ENCODE measurements at regions of chr16 and their contacts with region 1.

Region 1: GRCh38 chr16:84277237-84277823 is 17.3 kb upstream of the WFDC1 start:
- DNase-seq: peak; percentile 92
- H3K4me3 ChIP-seq: no peak overlapping the region
- H3K27ac ChIP-seq: no peak overlapping the region
- H3K4me1 ChIP-seq: peaks cover 0 to 4% (median 0%) of the 10 kb centered on the region in 6 donors
- H3K27me3 ChIP-seq: peaks cover 0 to 58% (median 0%) of the 10 kb centered on the region in 7 donors
- CTCF ChIP-seq: peak; percentile 31 to 86 (median 76)
- POLR2A ChIP-seq: no peak

Region 2: GRCh38 chr16:84484579-84485254 is 207.4 kb after region 1 on chr16:
- intact Hi-C with region 1: loop called (anchors 5 kb)
- DNase-seq: peak; percentile 72
- H3K4me3 ChIP-seq: no peak overlapping the region
- H3K27ac ChIP-seq: no peak overlapping the region
- H3K4me1 ChIP-seq: peaks cover 0 to 4% (median 0%) of the 10 kb centered on the region in 6 donors
- H3K27me3 ChIP-seq: no peaks in the 10 kb centered on the region
- CTCF ChIP-seq: peak; percentile 32 to 81 (median 62)
- POLR2A ChIP-seq: no peak

Region 3: GRCh38 chr16:84511180-84511824 is 234.0 kb after region 1 on chr16:
- intact Hi-C with region 1: no loop called
- DNase-seq: peak; percentile 96
- H3K4me3 ChIP-seq: peak overlapping the region in 1 of 8 donors; percentile 36
- H3K27ac ChIP-seq: peak overlapping the region in 4 of 8 donors; percentile 5 to 44 (median 30)
- H3K4me1 ChIP-seq: peaks cover 11 to 77% (median 51%) of the 10 kb centered on the region in 6 donors
- H3K27me3 ChIP-seq: no peaks in the 10 kb centered on the region
- CTCF ChIP-seq: peak; percentile 96 to 99 (median 98)
- POLR2A ChIP-seq: no peak

Measured in spleen (tissue), 13 donors.